ENCODE measurements at regions of chr5 and their contacts with region 1.

Region 1: DNA sequence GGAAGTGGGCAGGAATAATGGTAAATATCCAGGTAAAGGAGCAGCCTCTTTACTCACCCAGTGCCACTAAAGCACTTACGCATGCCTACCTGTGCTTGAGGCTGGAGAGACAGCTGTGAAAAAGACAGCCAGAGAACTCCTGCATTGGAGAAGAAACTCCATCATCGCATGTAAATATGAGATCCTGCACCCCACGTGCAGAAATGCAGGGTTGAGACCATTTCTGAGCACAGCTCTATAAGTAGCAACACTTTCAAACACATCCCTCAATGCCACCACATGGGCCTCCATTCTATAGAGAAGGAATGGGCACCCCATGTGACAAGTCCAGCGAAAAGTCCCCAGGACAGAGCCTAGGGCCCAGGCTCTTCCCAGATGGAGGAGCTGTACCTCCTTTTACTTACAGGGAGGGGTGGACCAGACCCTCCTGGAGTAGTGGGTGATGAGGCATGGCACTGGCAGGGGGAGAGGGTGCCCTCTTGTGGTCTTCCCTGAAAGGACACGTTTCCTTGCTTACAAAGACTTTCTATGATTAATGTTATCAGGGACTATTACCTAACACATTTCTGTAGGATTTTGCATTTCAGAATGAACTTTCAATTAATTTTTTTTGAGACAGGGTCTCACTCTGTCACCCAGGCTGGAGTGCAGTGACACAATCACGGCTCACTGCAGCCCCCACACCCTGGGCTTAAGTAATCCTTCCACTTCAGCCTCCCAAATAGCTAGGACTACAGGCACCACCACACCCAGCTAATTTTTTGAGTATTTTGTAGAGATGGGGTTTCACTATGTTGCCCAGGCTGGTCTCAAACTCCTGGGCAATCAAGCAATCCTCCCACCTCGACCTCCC is 55.3 kb upstream of the IL17B start:
- DNase-seq: peak; percentile 76
- ATAC-seq: peak; percentile 78
- H3K4me3 Mint-ChIP-seq: no peak overlapping the region
- H3K27ac Mint-ChIP-seq: no peak overlapping the region
- H3K4me1 Mint-ChIP-seq: peaks cover 9% of the 10 kb centered on the region
- H3K27me3 Mint-ChIP-seq: peaks cover 1% of the 10 kb centered on the region
- CTCF ChIP-seq: peak; percentile 91

Region 2: DNA sequence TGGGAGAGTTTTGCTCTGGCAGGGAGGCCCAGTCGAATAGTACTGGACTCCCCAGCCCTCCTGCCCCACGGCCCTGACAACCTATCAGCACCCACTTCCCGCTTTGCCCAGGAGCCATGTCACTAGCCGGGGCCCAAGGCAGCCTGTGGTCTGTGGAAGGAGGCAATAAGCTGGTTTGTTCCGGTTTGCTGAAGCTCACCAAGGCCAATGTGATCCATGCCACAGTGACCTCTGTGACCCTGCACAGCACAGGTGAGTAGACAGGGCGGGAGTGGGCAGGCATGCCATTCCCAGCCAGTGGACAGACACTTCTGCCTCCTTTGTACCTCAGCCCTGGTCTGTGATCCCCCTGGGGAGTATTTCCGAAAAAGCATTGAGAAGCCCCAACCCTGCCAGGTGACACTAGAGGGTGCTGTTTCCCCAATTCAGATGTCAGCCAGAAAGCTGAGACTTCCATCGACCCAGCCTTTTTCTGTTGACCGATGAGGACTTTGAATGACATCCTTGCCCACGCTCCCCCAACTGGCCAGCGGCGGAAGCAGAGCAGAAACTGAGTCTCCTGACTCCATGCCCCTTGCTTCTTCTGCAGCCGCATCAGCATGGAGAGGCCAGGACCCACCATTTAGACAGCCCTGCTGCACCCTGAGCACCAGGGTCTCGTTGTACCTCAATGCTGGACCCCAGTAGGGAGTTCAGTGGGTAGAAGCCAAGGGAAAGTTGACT is 67.0 kb before region 1 on chr5:
- CTCF ChIA-PET with region 1: interaction called, 21 read pairs
- POLR2A ChIA-PET with region 1: no interaction called
- intact Hi-C with region 1: no loop called
- DNase-seq: peak; percentile 73
- ATAC-seq: peak; percentile 70
- H3K4me3 Mint-ChIP-seq: no peak overlapping the region
- H3K27ac Mint-ChIP-seq: no peak overlapping the region
- H3K4me1 Mint-ChIP-seq: peaks cover 5% of the 10 kb centered on the region
- H3K27me3 Mint-ChIP-seq: no peaks in the 10 kb centered on the region
- CTCF ChIP-seq: peak; percentile 74

Region 3: DNA sequence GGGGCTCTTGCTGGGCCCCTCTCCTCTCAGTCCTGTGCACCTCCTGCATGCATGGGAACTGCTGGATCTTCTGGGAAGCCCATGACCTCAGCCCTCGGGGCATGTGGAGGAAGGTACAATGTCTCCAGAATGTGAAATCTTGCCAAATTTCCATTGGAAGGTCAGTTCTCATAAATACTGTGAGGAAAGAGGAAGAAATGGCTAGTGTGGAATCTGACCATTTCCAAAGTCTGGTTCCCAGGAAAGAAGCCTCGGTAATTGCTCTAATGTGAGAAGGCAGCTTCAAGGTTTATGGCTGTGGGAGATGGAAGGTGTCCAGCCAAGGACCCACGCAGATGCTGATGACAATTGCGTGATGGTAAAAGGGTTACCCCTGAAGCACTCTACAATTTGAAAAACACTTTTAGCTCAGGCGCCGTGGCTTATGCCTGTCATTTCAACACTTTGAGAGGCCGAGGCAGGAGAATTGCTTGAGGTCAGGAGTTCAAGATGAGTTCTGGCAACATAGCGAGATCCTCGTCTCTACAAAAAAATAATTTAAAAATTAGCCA is 47.2 kb before region 1 on chr5:
- CTCF ChIA-PET with region 1: interaction called, 42 read pairs
- POLR2A ChIA-PET with region 1: interaction called, 4 read pairs
- intact Hi-C with region 1: loop called (anchors 5 kb)
- DNase-seq: no peak
- ATAC-seq: no peak
- H3K4me3 Mint-ChIP-seq: no peak overlapping the region
- H3K27ac Mint-ChIP-seq: no peak overlapping the region
- H3K4me1 Mint-ChIP-seq: no peaks in the 10 kb centered on the region
- H3K27me3 Mint-ChIP-seq: no peaks in the 10 kb centered on the region
- CTCF ChIP-seq: no peak

Region 4: DNA sequence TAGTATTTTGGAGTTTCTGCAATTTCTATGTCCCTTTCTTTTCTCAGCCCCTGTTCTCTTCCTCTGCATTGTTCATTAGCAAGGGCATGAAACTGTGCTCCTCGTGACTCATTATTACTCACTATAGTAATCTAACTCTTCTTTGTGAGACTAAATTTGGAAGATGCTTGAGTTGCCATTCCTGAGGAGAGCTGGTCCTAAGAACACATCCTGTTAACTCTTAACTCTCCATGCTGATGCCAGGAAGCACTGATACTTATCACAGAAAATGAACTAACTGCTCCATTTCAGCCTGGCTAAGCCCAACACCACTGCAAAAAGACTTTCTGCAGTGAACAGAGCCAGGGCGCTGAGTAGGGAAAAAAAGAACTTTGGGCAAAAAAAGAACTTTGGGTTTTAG is 127.5 kb after region 1 on chr5:
- CTCF ChIA-PET with region 1: interaction called, 71 read pairs
- POLR2A ChIA-PET with region 1: no interaction called
- intact Hi-C with region 1: no loop called
- DNase-seq: no peak
- ATAC-seq: peak; percentile 81
- H3K4me3 Mint-ChIP-seq: no peak overlapping the region
- H3K27ac Mint-ChIP-seq: peak overlapping the region; percentile 40
- H3K4me1 Mint-ChIP-seq: peaks cover 24% of the 10 kb centered on the region
- H3K27me3 Mint-ChIP-seq: no peaks in the 10 kb centered on the region
- CTCF ChIP-seq: no peak

Region 5: GRCh38 chr5:149618581-149619251 is 184.3 kb after region 1 on chr5:
- CTCF ChIA-PET with region 1: interaction called, 19 read pairs
- POLR2A ChIA-PET with region 1: interaction called, 3 read pairs
- intact Hi-C with region 1: no loop called
- DNase-seq: peak; percentile 52
- ATAC-seq: peak; percentile 60
- H3K4me3 Mint-ChIP-seq: no peak overlapping the region
- H3K27ac Mint-ChIP-seq: no peak overlapping the region
- H3K4me1 Mint-ChIP-seq: peaks cover 7% of the 10 kb centered on the region
- H3K27me3 Mint-ChIP-seq: peaks cover 3% of the 10 kb centered on the region
- CTCF ChIP-seq: peak; percentile 60